Ovary (tissue), 10 donors: ENCODE measurements at regions of chr10 and their contacts with region 1.

Region 1: DNA sequence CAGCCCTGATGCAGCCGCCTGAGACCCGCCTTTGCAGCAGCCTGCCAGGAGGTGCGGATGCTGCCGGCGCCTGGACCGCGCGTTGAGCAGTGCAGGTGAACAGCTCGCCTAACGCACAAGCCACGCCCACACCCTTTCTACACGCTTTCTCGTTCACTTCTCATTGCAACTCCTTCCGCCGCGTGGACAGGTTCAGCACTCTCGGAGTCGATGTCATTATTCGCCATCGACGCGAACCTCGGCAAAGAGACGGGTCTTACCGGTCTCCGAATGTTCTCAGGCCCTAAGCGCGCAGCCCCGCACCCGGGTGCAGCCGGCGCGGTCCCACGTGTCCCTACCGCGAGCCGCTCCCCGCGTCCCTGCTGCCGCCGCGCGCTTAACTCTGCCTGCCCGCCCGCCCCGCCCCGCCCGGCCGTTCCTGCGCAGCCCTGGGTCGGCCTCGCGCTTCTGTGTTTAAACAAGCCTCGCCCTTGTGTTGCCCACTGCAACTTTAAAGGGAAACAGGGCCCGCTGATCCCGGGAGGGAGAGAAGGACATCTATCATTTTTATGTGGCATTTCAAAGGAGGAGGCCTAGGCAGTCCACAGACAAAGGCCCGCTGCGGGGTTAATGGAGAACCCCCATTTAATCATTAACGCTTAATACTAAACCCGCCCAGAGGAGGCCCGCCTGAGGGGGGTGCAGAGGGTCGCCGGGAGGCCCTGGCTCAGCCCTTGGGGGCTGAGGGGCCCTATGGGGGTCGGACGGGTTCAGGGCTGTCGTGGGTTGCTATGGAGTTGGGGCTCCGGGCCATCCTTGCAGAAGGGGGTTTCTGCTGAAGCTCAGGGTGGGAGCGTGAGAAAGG is 128.5 kb downstream of the WDR11 start:
- DNase-seq: peak in 3 of 5 donors; percentile 28 to 57 (median 46)
- H3K4me3 ChIP-seq: peak overlapping the region; percentile 39
- H3K27ac ChIP-seq: no peak overlapping the region
- H3K4me1 ChIP-seq: peaks cover 5% of the 10 kb centered on the region
- H3K27me3 ChIP-seq: no peaks in the 10 kb centered on the region
- CTCF ChIP-seq: no peak
- EP300 ChIP-seq: no peak
- POLR2A ChIP-seq: no peak

Region 2: DNA sequence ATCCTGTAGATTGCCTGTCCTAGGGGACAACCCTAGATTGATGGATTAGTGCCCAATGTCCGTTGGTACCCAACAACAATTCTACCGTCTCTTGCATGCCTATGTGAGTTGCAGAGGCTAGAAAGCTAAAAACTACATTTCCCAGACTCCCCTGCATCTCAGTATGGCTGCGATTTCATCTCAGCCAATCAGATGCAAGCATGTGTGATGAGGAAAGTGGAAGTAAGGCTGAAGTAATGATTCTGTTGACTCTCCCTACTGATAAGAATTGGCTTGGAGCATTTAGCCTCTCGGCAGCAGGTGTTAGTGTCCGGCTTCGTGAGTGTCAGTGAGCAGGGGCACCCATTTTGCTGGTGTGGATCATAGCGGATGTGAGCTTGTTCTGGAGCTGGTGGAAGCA is 446.6 kb after region 1 on chr10:
- intact Hi-C with region 1: loop called in 1 of 4 experiments (anchors 10 kb)
- DNase-seq: no peak
- H3K4me3 ChIP-seq: no peak overlapping the region
- H3K27ac ChIP-seq: no peak overlapping the region
- H3K4me1 ChIP-seq: no peaks in the 10 kb centered on the region
- H3K27me3 ChIP-seq: no peaks in the 10 kb centered on the region
- CTCF ChIP-seq: no peak
- EP300 ChIP-seq: no peak
- POLR2A ChIP-seq: no peak